ENCODE measurements at regions of chr6 and their contacts with region 1.

Region 1: GRCh38 chr6:46510651-46511050 is 19.4 kb upstream of the RCAN2 start:
- DNase-seq: peak in 4 of 10 donors; percentile 32 to 61 (median 52)
- H3K4me3 ChIP-seq: peak overlapping the region in 9 of 59 donors; percentile 12 to 34 (median 16)
- H3K27ac ChIP-seq: peak overlapping the region; percentile 44 to 98 (median 91)
- H3K27me3 ChIP-seq: no peaks in the 10 kb centered on the region
- CTCF ChIP-seq: peak in 6 of 56 donors; percentile 6 to 43 (median 20)

Region 2: DNA sequence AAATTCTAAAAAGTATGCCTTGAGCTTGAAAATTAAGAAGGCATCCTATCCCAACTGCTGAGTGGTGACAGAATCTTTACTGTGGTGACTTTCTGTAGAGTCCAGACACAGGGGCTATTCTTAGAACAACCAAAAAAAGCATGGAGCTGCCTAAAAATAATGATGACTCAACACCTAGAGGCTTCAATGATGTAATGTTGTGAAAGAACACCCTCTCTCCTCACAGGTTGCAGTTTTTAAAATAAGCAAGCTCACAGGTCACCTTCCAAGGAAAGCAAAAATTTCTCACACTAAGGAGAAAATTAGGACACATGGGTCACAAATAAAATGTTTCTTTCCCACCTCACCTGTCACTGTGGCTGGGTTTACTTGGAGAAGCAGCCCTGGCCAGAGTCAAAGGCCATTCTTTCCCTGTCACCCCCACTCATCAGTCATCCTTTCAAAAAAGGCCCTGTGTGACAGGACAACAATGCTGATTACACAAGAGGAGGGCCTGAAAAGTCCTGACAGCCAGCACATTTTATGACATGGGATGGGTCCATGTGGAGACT is 72.9 kb before region 1 on chr6:
- intact Hi-C with region 1: no loop called
- DNase-seq: no peak
- H3K4me3 ChIP-seq: no peak overlapping the region
- H3K27ac ChIP-seq: peak overlapping the region in 33 of 59 donors; percentile 1 to 74 (median 53)
- H3K27me3 ChIP-seq: no peaks in the 10 kb centered on the region
- CTCF ChIP-seq: no peak

Region 3: GRCh38 chr6:46606338-46606737 is 95.7 kb after region 1 on chr6:
- intact Hi-C with region 1: loop called in 1 of 2 experiments (anchors 5 kb)
- DNase-seq: no peak
- H3K4me3 ChIP-seq: peak overlapping the region in 5 of 59 donors; percentile 1 to 38 (median 13)
- H3K27ac ChIP-seq: peak overlapping the region in 20 of 59 donors; percentile 3 to 59 (median 28)
- H3K27me3 ChIP-seq: no peaks in the 10 kb centered on the region
- CTCF ChIP-seq: peak in 4 of 56 donors; percentile 11 to 18 (median 13)

Measured in dorsolateral prefrontal cortex (tissue), 120 donors.